Endothelial cell of umbilical vein (primary cell): ENCODE measurements at regions of chr2 and their contacts with region 1.

Region 1: GRCh38 chr2:151554291-151554690 is 144.6 kb downstream of the RIF1 start:
- DNase-seq: no peak
- H3K4me3 ChIP-seq: no peak overlapping the region
- H3K27ac ChIP-seq: no peak overlapping the region
- H3K4me1 ChIP-seq: no peaks in the 10 kb centered on the region
- H3K27me3 ChIP-seq: no peaks in the 10 kb centered on the region
- CTCF ChIP-seq: no peak
- POLR2A ChIP-seq: no peak

Region 2: GRCh38 chr2:151518802-151519201 is 35.5 kb before region 1 on chr2:
- CTCF ChIA-PET with region 1: no interaction called
- POLR2A ChIA-PET with region 1: no interaction called
- dilution Hi-C with region 1: no loop called
- intact Hi-C with region 1: loop called (anchors 1 kb)
- DNase-seq: peak; percentile 32
- H3K4me3 ChIP-seq: no peak overlapping the region
- H3K27ac ChIP-seq: no peak overlapping the region
- H3K4me1 ChIP-seq: no peaks in the 10 kb centered on the region
- H3K27me3 ChIP-seq: no peaks in the 10 kb centered on the region
- CTCF ChIP-seq: no peak
- POLR2A ChIP-seq: no peak

Region 3: DNA sequence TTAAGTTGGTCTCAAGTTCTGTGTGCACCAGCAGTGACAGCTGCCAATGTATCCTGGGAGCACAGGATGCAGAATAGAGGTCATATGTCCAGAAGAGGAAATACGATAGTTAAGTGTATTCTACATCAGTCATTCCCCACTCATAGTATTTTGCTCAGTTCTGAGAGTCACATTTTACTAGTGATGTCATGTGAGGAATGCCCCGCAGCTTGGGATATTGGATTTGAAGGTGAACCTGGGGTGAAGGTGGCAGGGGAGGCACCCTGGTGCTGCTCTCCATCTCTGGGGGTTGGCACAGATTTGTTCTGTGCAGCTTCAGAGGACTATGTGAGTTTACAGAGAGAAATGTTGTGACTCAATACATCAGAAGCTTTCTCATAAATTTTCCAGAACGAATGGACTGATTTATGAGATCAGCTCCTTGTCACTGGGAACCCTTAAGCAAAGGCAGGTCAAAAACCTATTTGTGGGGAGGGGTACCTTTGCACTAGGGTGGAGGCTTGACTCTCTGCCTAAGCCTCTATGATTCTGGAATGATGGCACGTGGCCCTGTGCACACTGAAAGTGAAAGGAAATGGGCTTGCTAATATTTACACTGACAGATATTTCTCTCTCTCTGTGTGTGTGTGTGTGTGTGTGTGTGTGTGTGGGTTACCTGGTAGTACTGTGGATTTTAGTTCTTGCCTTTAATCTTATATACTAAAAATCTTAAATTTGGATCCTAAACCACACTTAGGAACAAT is 84.1 kb after region 1 on chr2:
- CTCF ChIA-PET with region 1: no interaction called
- POLR2A ChIA-PET with region 1: no interaction called
- dilution Hi-C with region 1: no loop called
- intact Hi-C with region 1: no loop called
- DNase-seq: peak; percentile 69
- H3K4me3 ChIP-seq: no peak overlapping the region
- H3K27ac ChIP-seq: peak overlapping the region; percentile 81
- H3K4me1 ChIP-seq: peaks cover 22% of the 10 kb centered on the region
- H3K27me3 ChIP-seq: no peaks in the 10 kb centered on the region
- CTCF ChIP-seq: no peak
- POLR2A ChIP-seq: no peak

Region 4: DNA sequence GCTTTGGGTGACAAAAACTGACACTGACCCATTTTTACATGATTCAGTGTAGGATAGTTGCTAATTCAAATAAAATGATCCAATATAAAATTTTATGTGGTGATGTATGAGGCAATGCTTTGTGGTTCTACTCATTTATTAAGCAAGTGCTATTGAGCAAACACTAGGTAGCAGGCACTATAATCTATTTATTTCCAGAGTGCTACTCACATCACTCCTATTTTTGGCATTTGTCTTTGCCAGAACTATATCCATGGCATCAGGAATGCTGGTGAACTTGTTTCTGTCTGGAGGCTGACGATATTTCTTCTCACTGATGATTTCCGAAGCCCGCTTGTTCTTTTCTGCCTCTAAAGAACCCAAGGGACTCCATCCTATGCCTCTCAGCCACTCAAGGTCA is 95.7 kb after region 1 on chr2:
- CTCF ChIA-PET with region 1: no interaction called
- POLR2A ChIA-PET with region 1: no interaction called
- dilution Hi-C with region 1: no loop called
- intact Hi-C with region 1: no loop called
- DNase-seq: no peak
- H3K4me3 ChIP-seq: no peak overlapping the region
- H3K27ac ChIP-seq: no peak overlapping the region
- H3K4me1 ChIP-seq: no peaks in the 10 kb centered on the region
- H3K27me3 ChIP-seq: no peaks in the 10 kb centered on the region
- CTCF ChIP-seq: no peak
- POLR2A ChIP-seq: no peak

Region 5: GRCh38 chr2:151733771-151734672 is 179.7 kb after region 1 on chr2 and contains the start of gene NEB:
- CTCF ChIA-PET with region 1: no interaction called
- POLR2A ChIA-PET with region 1: no interaction called
- dilution Hi-C with region 1: no loop called
- intact Hi-C with region 1: no loop called
- DNase-seq: no peak
- H3K4me3 ChIP-seq: no peak within 1 kb of the TSS
- H3K27ac ChIP-seq: no peak within 1 kb of the TSS
- H3K4me1 ChIP-seq: no peaks in the 10 kb centered on the region
- H3K27me3 ChIP-seq: peaks cover 0 to 5% of the 10 kb centered on the region in 2 experiments
- CTCF ChIP-seq: no peak
- POLR2A ChIP-seq: no peak
- total RNA-seq, gene NEB: 1.8 and 3.6 TPM in 2 replicates